T-cell (primary cell): ENCODE measurements at regions of chr9 and their contacts with region 1.

Region 1: DNA sequence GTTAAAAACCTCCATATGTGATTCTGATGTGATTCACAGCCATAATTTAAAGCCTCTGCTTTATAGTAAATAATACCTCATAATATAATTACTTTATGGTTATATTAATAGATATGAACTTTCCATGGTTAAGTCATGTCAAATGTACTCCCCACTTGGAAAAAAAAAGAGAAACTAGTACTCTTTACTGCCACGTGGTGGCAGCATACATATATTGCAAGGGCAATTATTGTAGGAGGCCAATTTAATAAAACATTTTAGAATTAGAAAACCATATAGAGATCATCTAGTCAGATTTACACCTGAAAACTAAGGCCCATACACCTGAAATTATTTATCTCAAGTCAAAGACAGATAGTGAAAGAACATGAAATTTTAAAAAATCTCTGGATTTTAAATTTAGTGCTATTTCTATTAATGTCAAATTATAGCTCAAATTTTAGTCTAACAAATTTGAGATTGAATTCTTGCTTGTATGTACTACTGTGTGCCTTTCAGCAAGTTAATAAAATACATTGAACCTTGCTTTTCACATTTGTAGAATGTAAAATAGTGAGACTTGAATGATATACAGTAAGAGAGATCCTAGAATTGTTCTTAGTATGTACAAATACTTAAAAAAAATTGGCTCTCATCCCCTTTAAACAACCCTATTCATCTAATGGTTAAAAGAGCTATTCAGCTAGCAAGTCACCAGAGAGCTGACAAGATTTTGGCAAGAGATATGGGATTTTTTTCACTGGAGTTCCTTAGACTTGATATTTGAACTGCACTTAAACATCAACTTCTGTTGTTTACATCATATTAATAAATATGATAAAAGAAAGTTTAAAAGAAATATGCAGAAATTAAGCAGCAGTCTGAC is 603.8 kb downstream of the TLE4 start:
- DNase-seq: peak in 2 of 35 experiments; percentile 6 to 34
- ATAC-seq: no peak
- H3K4me3 ChIP-seq: no peak overlapping the region
- H3K4me3 Mint-ChIP-seq: no peak overlapping the region
- H3K27ac ChIP-seq: no peak overlapping the region
- H3K27ac Mint-ChIP-seq: no peak overlapping the region
- H3K4me1 ChIP-seq: no peaks in the 10 kb centered on the region
- H3K4me1 Mint-ChIP-seq: no peaks in the 10 kb centered on the region
- H3K27me3 ChIP-seq: no peaks in the 10 kb centered on the region
- H3K27me3 Mint-ChIP-seq: no peaks in the 10 kb centered on the region

Region 2: GRCh38 chr9:79432485-79432884 is 743.0 kb before region 1 on chr9:
- CTCF ChIA-PET with region 1: no interaction called
- POLR2A ChIA-PET with region 1: interaction called in 1 of 2 experiments, 15 read pairs
- DNase-seq: peak in 1 of 35 experiments; percentile 5
- ATAC-seq: no peak
- H3K4me3 ChIP-seq: no peak overlapping the region
- H3K4me3 Mint-ChIP-seq: no peak overlapping the region
- H3K27ac ChIP-seq: no peak overlapping the region
- H3K27ac Mint-ChIP-seq: no peak overlapping the region
- H3K4me1 ChIP-seq: peaks cover 0 to 2% of the 10 kb centered on the region in 2 experiments
- H3K4me1 Mint-ChIP-seq: peaks cover 0 to 3% (median 3%) of the 10 kb centered on the region in 3 donors
- H3K27me3 ChIP-seq: no peaks in the 10 kb centered on the region
- H3K27me3 Mint-ChIP-seq: peaks cover 3 to 6% of the 10 kb centered on the region in 2 donors

Region 3: GRCh38 chr9:80040457-80040856 is 135.1 kb before region 1 on chr9:
- CTCF ChIA-PET with region 1: no interaction called
- POLR2A ChIA-PET with region 1: no interaction called
- DNase-seq: no peak
- ATAC-seq: no peak
- H3K4me3 ChIP-seq: no peak overlapping the region
- H3K4me3 Mint-ChIP-seq: no peak overlapping the region
- H3K27ac ChIP-seq: no peak overlapping the region
- H3K27ac Mint-ChIP-seq: no peak overlapping the region
- H3K4me1 ChIP-seq: no peaks in the 10 kb centered on the region
- H3K4me1 Mint-ChIP-seq: no peaks in the 10 kb centered on the region
- H3K27me3 ChIP-seq: peaks cover 0 to 2% of the 10 kb centered on the region in 2 experiments
- H3K27me3 Mint-ChIP-seq: peaks cover 0 to 3% of the 10 kb centered on the region in 2 donors

Region 4: DNA sequence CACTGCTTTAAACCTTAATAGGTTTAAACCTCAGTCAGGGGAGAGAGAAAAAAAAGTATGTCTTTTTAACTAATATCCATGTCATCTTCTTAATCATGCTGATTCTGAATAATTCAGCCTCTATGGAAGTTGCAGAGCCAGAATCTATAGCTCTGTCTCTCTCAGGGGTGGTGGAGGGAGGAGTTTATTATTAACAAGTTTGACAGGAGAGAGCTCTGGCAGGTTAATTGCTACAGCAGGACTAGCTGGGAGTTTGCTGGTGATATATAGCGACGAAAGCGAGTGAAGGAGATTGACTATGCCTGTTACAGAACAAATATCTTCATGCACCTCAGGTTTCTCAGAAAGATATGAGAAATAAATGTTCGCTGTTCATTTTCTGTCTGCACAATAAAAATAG is 17.4 kb before region 1 on chr9:
- CTCF ChIA-PET with region 1: interaction called in 1 of 2 experiments, 16 read pairs
- POLR2A ChIA-PET with region 1: no interaction called
- DNase-seq: no peak
- ATAC-seq: no peak
- H3K4me3 ChIP-seq: no peak overlapping the region
- H3K4me3 Mint-ChIP-seq: no peak overlapping the region
- H3K27ac ChIP-seq: no peak overlapping the region
- H3K27ac Mint-ChIP-seq: no peak overlapping the region
- H3K4me1 ChIP-seq: no peaks in the 10 kb centered on the region
- H3K4me1 Mint-ChIP-seq: no peaks in the 10 kb centered on the region
- H3K27me3 ChIP-seq: no peaks in the 10 kb centered on the region
- H3K27me3 Mint-ChIP-seq: peaks cover 3 to 5% of the 10 kb centered on the region in 2 donors

Region 5: GRCh38 chr9:80673496-80673895 is 498.0 kb after region 1 on chr9:
- CTCF ChIA-PET with region 1: no interaction called
- POLR2A ChIA-PET with region 1: no interaction called
- DNase-seq: no peak
- ATAC-seq: no peak
- H3K4me3 ChIP-seq: no peak overlapping the region
- H3K4me3 Mint-ChIP-seq: no peak overlapping the region
- H3K27ac ChIP-seq: no peak overlapping the region
- H3K27ac Mint-ChIP-seq: no peak overlapping the region
- H3K4me1 ChIP-seq: no peaks in the 10 kb centered on the region
- H3K4me1 Mint-ChIP-seq: no peaks in the 10 kb centered on the region
- H3K27me3 ChIP-seq: no peaks in the 10 kb centered on the region
- H3K27me3 Mint-ChIP-seq: no peaks in the 10 kb centered on the region